Activated T-helper 2 cell treated with anti-CD3 and anti-CD28 coated beads, Interferon-gamma antibody, Interleukin-2, Interleukin-4, amounts not matched to agents 10 μg/mL and 5 μg/mL and 100 μg/mL, durations not matched to agents 14 hours and 24 hours and 36 hours (primary cell): ENCODE measurements at regions of chr14 and their contacts with region 1.

Region 1: DNA sequence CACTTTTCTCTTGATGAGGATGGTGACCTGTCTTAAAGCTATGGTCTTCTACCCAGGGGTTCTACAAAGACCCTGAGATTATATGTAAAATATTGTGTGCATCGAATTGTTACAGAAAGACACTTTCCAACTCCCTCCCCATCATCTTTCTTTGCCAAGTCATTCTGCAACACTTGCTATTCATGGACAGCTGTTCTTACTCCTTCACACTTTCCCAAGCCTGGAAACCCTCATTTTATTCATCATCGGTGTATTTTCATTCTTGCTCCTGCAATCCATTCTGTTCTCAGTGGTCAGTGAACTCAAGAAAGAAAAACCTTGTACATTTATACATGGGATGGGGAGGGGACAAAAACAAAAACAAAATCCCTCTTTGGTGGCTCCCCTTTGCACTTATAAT is 90.5 kb upstream of the STXBP6 start:
- DNase-seq: no peak
- H3K4me3 Mint-ChIP-seq: no peak overlapping the region
- H3K27ac Mint-ChIP-seq: no peak overlapping the region
- H3K4me1 Mint-ChIP-seq: no peaks in the 10 kb centered on the region
- H3K27me3 Mint-ChIP-seq: peaks cover 2% of the 10 kb centered on the region

Region 2: DNA sequence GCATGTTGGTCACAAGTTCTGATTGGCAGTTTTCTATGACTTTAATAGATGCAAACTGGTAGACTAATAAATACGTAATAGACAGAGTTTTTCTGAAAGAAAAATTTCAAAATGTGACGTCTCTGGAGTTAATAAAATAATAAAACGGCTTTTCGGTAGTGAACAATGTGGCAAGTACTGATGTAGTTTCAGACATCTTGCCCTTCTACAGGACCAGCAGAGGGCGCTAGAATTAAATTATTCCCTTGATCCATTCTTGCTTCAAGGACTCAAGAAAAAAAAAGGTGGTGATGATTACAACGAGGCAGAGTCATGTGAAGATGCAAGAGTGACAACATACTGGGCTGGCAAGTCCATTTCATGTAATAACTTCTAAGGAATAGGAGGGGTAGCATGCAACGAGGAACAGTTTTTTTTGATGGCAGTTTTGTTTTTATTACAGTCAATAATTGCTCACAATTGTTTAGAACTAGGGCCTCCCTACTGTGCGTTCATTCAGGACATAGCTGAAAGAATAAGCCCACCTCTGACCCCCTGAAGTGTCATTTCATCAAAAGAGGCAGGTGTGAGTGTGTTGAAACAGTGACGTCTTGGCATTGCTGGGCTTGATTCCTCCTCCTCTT is 405.4 kb before region 1 on chr14:
- intact Hi-C with region 1: loop called (anchors 10 kb)
- DNase-seq: no peak
- H3K4me3 Mint-ChIP-seq: no peak overlapping the region
- H3K27ac Mint-ChIP-seq: no peak overlapping the region
- H3K4me1 Mint-ChIP-seq: no peaks in the 10 kb centered on the region
- H3K27me3 Mint-ChIP-seq: peaks cover 6% of the 10 kb centered on the region

Region 3: GRCh38 chr14:25303934-25304333 is 163.5 kb after region 1 on chr14:
- intact Hi-C with region 1: no loop called
- DNase-seq: no peak
- H3K4me3 Mint-ChIP-seq: no peak overlapping the region
- H3K27ac Mint-ChIP-seq: no peak overlapping the region
- H3K4me1 Mint-ChIP-seq: no peaks in the 10 kb centered on the region
- H3K27me3 Mint-ChIP-seq: no peaks in the 10 kb centered on the region